PC-9 (cell line): ENCODE measurements at regions of chr19 and their contacts with region 1.

Region 1: GRCh38 chr19:57914531-57914930 is 1.9 kb downstream of the ZNF417 start:
- DNase-seq: no peak
- H3K4me3 ChIP-seq: peak overlapping the region; percentile 63; the same call in 1 of the 2 replicates
- H3K27ac ChIP-seq: no peak overlapping the region
- H3K4me1 ChIP-seq: 0 out of 2 replicates have a peak, but pooled peaks cover 7% of the 10 kb centered on the region
- H3K27me3 ChIP-seq: no peaks in the 10 kb centered on the region
- CTCF ChIP-seq: no peak

Region 2: GRCh38 chr19:57477191-57478008 is 437.1 kb before region 1 on chr19 and contains the start of gene ZNF772:
- CTCF ChIA-PET with region 1: no interaction called
- POLR2A ChIA-PET with region 1: no interaction called
- intact Hi-C with region 1: loop called (anchors 5 kb)
- DNase-seq: peak; percentile 89 to 94
- H3K4me3 ChIP-seq: peak within 1 kb of the TSS; percentile 70
- H3K27ac ChIP-seq: no peak within 1 kb of the TSS
- H3K4me1 ChIP-seq: no peaks in the 10 kb centered on the region; the same call in 1 of the 2 replicates
- H3K27me3 ChIP-seq: no peaks in the 10 kb centered on the region
- CTCF ChIP-seq: peak; percentile 79
- total RNA-seq, gene ZNF772: 8.3 and 9.1 TPM in 2 replicates

Region 3: DNA sequence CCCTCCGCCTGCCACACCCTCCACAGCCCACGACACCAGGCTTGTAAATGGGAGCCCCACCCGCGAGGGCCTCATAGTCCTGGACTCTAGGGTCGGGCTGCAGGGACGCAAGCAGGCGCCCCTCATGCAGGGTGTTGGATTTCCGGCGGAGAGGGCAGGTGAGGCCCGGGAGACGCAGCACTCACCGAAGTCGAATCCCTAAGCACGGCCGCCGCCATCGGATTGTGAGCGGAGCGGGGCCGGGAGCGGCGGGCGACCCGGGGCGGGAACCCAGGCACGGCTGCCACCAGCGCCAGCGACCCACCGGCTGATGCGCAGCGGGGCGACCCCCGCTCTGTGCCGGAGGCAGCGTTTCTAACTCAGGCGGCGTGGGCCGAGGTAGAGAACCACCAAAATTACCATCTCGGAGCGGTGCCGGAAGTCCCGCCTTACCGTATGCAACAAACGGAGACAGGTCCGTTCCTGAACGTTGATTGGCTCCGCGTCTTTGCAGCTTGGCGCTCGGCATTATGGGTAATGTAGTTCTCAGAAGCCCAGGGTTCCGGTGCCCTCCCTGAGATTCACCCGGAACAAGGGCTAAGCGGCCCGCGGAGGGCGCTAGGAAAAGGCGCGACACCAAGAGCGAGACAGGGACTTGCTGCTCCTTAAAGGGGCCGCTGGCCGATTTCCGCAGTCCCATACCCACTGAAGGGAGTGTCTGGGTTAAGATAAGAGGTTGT is 335.9 kb before region 1 on chr19 and contains the start of gene ZNF416:
- CTCF ChIA-PET with region 1: no interaction called
- POLR2A ChIA-PET with region 1: no interaction called
- intact Hi-C with region 1: loop called (anchors 1 kb)
- DNase-seq: peak; percentile 97
- H3K4me3 ChIP-seq: peak within 1 kb of the TSS; percentile 75
- H3K27ac ChIP-seq: no peak within 1 kb of the TSS
- H3K4me1 ChIP-seq: peaks cover 10% of the 10 kb centered on the region
- H3K27me3 ChIP-seq: 0 out of 2 replicates have a peak, but pooled peaks cover 3% of the 10 kb centered on the region
- CTCF ChIP-seq: no peak; the same call in 1 of the 2 replicates
- total RNA-seq, gene ZNF416: 4.8 and 5.6 TPM in 2 replicates

Region 4: GRCh38 chr19:57632987-57633831 is 281.3 kb before region 1 on chr19 and contains the start of gene ZNF211:
- CTCF ChIA-PET with region 1: no interaction called
- POLR2A ChIA-PET with region 1: interaction called, 15 read pairs
- intact Hi-C with region 1: no loop called
- DNase-seq: peak; percentile 90 to 91
- H3K4me3 ChIP-seq: peak within 1 kb of the TSS; percentile 74
- H3K27ac ChIP-seq: no peak within 1 kb of the TSS
- H3K4me1 ChIP-seq: peaks cover 7% of the 10 kb centered on the region
- H3K27me3 ChIP-seq: no peaks in the 10 kb centered on the region
- CTCF ChIP-seq: no peak
- total RNA-seq, gene ZNF211: 7.9 and 11.4 TPM in 2 replicates

Region 5: GRCh38 chr19:57903618-57904184 is 10.8 kb before region 1 on chr19:
- CTCF ChIA-PET with region 1: interaction called, 24 read pairs
- POLR2A ChIA-PET with region 1: no interaction called
- intact Hi-C with region 1: no loop called
- DNase-seq: no peak
- H3K4me3 ChIP-seq: no peak overlapping the region
- H3K27ac ChIP-seq: no peak overlapping the region
- H3K4me1 ChIP-seq: no peaks in the 10 kb centered on the region
- H3K27me3 ChIP-seq: no peaks in the 10 kb centered on the region
- CTCF ChIP-seq: peak; percentile 48; the same call in 1 of the 2 replicates

Region 6: DNA sequence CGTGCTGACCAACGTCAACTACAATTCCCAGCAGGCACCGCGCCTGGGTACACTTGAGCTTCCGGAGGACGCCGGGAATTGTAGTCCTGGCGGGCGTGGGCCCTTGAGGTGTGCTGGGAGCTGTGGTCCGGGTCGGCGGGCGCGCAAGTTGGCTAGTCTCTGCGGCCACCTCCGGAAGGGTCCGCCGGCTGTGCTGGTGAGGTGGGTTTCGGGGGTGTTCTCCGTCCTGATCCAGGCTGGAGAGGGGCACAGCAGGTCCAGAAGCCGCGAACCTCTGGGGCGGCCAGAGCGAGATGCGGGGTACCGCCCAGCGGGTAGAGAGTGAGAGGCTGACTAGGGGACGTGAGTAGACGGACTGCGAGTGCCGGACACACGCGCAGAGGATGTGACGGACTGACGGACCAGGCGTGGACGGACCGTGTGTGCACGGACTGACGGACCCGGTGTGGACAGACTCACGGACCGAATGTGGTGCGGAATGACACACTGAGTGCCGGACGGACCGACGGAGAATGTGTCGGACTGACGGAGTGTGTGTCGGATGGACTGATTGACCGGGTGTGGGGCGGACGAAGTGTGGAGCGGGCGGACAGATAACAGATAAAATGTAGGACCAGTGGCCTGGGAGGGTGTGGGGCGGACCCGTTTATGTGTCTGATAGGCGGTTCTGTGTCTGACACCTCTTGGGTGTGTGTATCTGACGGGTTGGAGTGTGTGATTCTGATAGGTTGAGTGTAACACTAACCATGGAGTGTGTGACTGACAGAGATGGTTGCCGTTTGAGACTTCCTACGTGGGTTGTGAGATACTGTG is 412.6 kb after region 1 on chr19 and contains the start of gene ZSCAN22:
- CTCF ChIA-PET with region 1: no interaction called
- POLR2A ChIA-PET with region 1: interaction called, 13 read pairs
- intact Hi-C with region 1: no loop called
- DNase-seq: peak; percentile 86 to 90
- H3K4me3 ChIP-seq: peak within 1 kb of the TSS; percentile 80
- H3K27ac ChIP-seq: peak within 1 kb of the TSS; percentile 50
- H3K4me1 ChIP-seq: no peaks in the 10 kb centered on the region; the same call in 1 of the 2 replicates
- H3K27me3 ChIP-seq: no peaks in the 10 kb centered on the region
- CTCF ChIP-seq: no peak
- total RNA-seq, gene ZSCAN22: 0.08 TPM in 1 of 2 replicates, not detected in the other